IMR-90 (cell line): ENCODE measurements at regions of chrX and their contacts with region 1.

Region 1: GRCh38 chrX:13688958-13689740 is at the start of gene RAB9A:
- DNase-seq: peak; percentile 68
- ATAC-seq: peak; percentile 99
- H3K4me3 ChIP-seq: peak within 1 kb of the TSS; percentile 86
- H3K27ac ChIP-seq: peak within 1 kb of the TSS; percentile 90
- H3K4me1 ChIP-seq: peaks cover 5% of the 10 kb centered on the region
- H3K27me3 ChIP-seq: peaks cover 6% of the 10 kb centered on the region
- CTCF ChIP-seq: no peak
- POLR2A ChIP-seq: peak; percentile 72
- RAD21 ChIP-seq: no peak
- total RNA-seq, gene RAB9A: 15.8 and 26.7 TPM in 2 replicates

Region 2: DNA sequence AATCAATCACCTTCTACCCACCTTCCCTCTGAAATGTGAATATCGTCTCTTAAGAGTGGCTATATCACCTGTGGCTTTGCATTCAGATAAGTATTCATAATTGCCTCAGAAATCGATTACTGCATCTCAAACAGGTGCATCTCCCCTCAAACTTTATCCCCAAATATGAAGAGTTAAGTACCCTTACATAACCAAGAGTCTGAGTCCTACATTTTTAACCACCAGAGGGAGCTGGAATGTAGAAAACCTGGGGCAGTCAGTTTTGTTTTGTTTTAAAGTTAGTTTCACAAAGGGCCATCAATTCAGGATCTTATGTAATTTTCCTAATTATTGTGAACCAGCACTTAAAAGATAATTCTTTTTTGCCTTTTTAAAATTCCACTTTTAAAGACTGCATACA is 30.5 kb before region 1 on chrX:
- CTCF ChIA-PET with region 1: no interaction called
- POLR2A ChIA-PET with region 1: no interaction called
- dilution Hi-C with region 1: no loop called
- in situ Hi-C with region 1: no loop called
- intact Hi-C with region 1: loop called (anchors 2 kb)
- DNase-seq: peak; percentile 73
- ATAC-seq: peak; percentile 71
- H3K4me3 ChIP-seq: no peak overlapping the region
- H3K27ac ChIP-seq: no peak overlapping the region
- H3K4me1 ChIP-seq: peaks cover 5% of the 10 kb centered on the region; the same call in 1 of the 2 replicates
- H3K27me3 ChIP-seq: peaks cover 2% of the 10 kb centered on the region
- CTCF ChIP-seq: peak; percentile 80
- POLR2A ChIP-seq: no peak
- RAD21 ChIP-seq: peak; percentile 73

Region 3: GRCh38 chrX:13721819-13722519 is 32.8 kb after region 1 on chrX:
- CTCF ChIA-PET with region 1: no interaction called
- POLR2A ChIA-PET with region 1: interaction called, 3 read pairs
- dilution Hi-C with region 1: no loop called
- in situ Hi-C with region 1: no loop called
- intact Hi-C with region 1: loop called (anchors 2 kb)
- DNase-seq: peak; percentile 86
- ATAC-seq: peak; percentile 83
- H3K4me3 ChIP-seq: peak overlapping the region; percentile 22; the same call in 1 of the 2 replicates
- H3K27ac ChIP-seq: peak overlapping the region; percentile 91
- H3K4me1 ChIP-seq: peaks cover 18% of the 10 kb centered on the region
- H3K27me3 ChIP-seq: no peaks in the 10 kb centered on the region
- CTCF ChIP-seq: no peak
- POLR2A ChIP-seq: no peak
- RAD21 ChIP-seq: no peak

Region 4: DNA sequence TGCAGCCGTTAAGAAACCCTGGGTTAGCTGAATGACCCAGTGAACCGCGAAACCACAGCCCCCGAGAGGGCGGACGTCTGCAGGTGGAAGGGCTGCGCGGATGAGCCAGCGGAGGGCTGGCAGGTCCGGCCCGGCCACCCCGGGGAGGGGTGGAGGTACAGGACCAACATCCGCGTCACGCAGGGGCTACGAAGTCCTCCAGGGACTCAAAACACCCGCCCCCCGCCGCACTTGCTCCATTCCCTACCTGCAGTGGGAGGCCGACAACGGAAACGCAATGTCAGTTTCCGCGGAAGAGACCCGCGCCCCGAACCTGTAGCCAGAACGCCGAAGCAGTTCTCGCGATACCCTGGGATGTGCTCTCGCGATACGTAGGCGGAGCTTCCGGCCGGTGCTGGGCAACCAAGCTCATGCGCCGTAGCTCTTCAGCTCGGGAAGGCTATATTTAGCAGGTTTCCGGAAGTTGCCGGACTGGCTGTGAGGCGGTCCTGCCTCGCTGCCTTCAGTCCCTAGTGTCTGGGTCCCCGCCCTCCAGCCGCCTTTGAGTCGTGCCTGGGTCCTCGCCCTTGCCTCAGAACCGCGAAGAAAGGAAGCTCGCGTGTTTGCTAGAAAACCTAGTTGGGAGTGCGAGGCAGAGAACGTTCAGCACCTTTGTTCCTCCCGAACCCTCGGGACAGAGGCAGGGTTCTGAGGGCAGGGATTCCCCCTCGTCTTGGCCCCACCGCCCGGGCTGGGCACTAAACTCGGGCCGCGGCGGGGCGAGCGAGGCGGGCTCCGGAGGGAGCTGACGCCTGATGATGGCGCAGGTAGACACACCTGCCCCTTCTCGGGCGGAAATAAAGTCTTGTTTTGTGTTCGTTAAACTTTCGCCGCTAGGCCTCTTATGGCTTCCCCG is 45.4 kb after region 1 on chrX and contains the starts of genes OFD1 and TRAPPC2:
- CTCF ChIA-PET with region 1: no interaction called
- POLR2A ChIA-PET with region 1: no interaction called
- dilution Hi-C with region 1: no loop called
- in situ Hi-C with region 1: no loop called
- intact Hi-C with region 1: loop called (anchors 5 kb)
- DNase-seq: peak; percentile 97
- ATAC-seq: peak; percentile 97
- H3K4me3 ChIP-seq: peak within 1 kb of the TSS; percentile 81
- H3K27ac ChIP-seq: peak within 1 kb of the TSS; percentile 90
- H3K4me1 ChIP-seq: no peaks in the 10 kb centered on the region
- H3K27me3 ChIP-seq: no peaks in the 10 kb centered on the region
- CTCF ChIP-seq: no peak
- POLR2A ChIP-seq: peak; percentile 95
- RAD21 ChIP-seq: peak; percentile 28; the same call in 1 of the 2 replicates
- total RNA-seq, gene OFD1: 8.4 and 10.6 TPM in 2 replicates
- total RNA-seq, gene TRAPPC2: 13.8 and 19.2 TPM in 2 replicates

Region 5: GRCh38 chrX:13891377-13892140 is 202.4 kb after region 1 on chrX:
- CTCF ChIA-PET with region 1: no interaction called
- POLR2A ChIA-PET with region 1: no interaction called
- dilution Hi-C with region 1: no loop called
- in situ Hi-C with region 1: no loop called
- intact Hi-C with region 1: no loop called
- DNase-seq: no peak
- ATAC-seq: no peak
- H3K4me3 ChIP-seq: no peak overlapping the region
- H3K27ac ChIP-seq: no peak overlapping the region
- H3K4me1 ChIP-seq: no peaks in the 10 kb centered on the region
- H3K27me3 ChIP-seq: peaks cover 7% of the 10 kb centered on the region; the same call in 1 of the 2 replicates
- CTCF ChIP-seq: no peak
- POLR2A ChIP-seq: no peak
- RAD21 ChIP-seq: no peak